Endothelial cell of umbilical vein (primary cell): ENCODE measurements at regions of chr3 and their contacts with region 1.

Region 1: DNA sequence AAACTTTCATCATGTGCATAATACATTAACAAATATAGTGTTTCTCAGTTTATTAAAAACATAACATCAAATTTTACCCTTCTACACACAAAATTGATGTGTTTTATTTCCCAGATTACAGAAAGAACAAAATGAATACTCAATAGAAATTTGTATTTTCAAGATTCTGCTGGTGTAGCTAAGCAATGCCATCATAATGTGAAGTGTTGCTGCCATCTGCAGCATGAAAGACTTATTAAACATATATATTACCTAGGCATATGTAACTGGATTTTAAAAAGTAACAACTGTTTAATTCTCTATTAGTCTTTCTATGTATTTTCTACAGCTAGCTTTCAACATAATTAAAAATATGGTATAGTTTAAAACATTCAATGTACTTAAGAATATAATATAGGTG is 27.5 kb downstream of the PLSCR5 start:
- DNase-seq: peak; percentile 76
- H3K4me3 ChIP-seq: no peak overlapping the region
- H3K27ac ChIP-seq: no peak overlapping the region
- H3K4me1 ChIP-seq: no peaks in the 10 kb centered on the region
- H3K27me3 ChIP-seq: no peaks in the 10 kb centered on the region
- CTCF ChIP-seq: peak in 1 of 2 donors; percentile 8
- POLR2A ChIP-seq: no peak

Region 2: DNA sequence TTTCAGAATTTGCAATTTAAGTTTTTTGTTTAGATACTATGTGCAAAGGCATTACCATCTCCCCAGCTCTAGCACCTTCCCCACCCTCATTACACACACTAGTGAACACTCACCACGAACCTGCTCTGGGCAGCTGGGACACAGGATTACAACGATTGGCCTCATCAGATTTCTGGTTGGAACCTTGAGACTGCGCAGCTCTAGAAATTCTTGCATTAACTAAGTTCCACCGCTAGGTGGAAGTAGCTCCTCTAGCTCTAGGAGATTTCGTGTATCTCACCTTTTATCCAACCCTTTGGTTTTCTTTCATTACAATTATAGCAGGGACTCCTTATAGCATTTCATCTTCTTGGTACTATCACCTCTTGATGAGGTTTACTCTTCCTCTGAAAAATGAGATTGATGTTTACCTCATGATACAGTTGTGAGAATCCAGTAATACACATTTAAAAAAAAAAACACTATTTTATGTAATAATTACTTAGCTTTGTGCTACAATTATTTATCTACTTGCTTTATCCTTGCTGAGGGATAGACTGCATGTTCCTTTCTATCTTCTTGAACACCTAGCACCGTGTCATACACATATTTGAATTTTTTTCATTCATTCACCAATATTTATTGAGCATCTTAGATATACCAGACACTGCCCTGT is 388.0 kb before region 1 on chr3:
- CTCF ChIA-PET with region 1: interaction called, 62 read pairs
- POLR2A ChIA-PET with region 1: no interaction called
- dilution Hi-C with region 1: no loop called
- intact Hi-C with region 1: loop called (anchors 1 kb)
- DNase-seq: peak; percentile 70
- H3K4me3 ChIP-seq: no peak overlapping the region
- H3K27ac ChIP-seq: peak overlapping the region; percentile 43
- H3K4me1 ChIP-seq: peaks cover 21% of the 10 kb centered on the region
- H3K27me3 ChIP-seq: no peaks in the 10 kb centered on the region
- CTCF ChIP-seq: peak; percentile 62 to 68
- POLR2A ChIP-seq: no peak

Region 3: GRCh38 chr3:146334151-146334550 is 243.5 kb before region 1 on chr3:
- CTCF ChIA-PET with region 1: interaction called, 98 read pairs
- POLR2A ChIA-PET with region 1: no interaction called
- dilution Hi-C with region 1: no loop called
- intact Hi-C with region 1: loop called (anchors 1 kb)
- DNase-seq: peak; percentile 46
- H3K4me3 ChIP-seq: no peak overlapping the region
- H3K27ac ChIP-seq: no peak overlapping the region
- H3K4me1 ChIP-seq: no peaks in the 10 kb centered on the region
- H3K27me3 ChIP-seq: no peaks in the 10 kb centered on the region
- CTCF ChIP-seq: peak in 1 of 2 donors; percentile 21
- POLR2A ChIP-seq: no peak

Region 4: DNA sequence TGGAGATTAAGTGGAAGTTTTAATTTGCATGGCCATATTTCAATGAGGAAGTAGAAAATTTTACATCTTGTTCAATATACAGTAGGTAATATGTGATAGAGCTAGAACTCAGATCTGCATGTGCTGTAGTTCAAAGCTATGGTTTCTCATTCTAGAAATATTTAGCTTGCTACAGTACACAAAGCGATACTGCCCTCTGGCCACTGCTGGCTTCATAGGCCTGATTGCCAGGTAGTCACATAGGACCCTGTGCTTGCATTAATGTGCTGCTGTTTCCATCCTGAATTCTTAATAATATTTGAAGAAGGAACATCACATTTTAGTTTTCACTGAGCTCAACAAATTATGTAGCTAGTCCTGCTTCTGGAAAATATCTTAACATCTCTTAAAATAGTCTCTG is 195.3 kb before region 1 on chr3:
- CTCF ChIA-PET with region 1: interaction called, 15 read pairs
- POLR2A ChIA-PET with region 1: no interaction called
- dilution Hi-C with region 1: no loop called
- intact Hi-C with region 1: no loop called
- DNase-seq: peak; percentile 34
- H3K4me3 ChIP-seq: no peak overlapping the region
- H3K27ac ChIP-seq: no peak overlapping the region
- H3K4me1 ChIP-seq: no peaks in the 10 kb centered on the region
- H3K27me3 ChIP-seq: no peaks in the 10 kb centered on the region
- CTCF ChIP-seq: peak in 1 of 2 donors; percentile 25
- POLR2A ChIP-seq: no peak

Region 5: GRCh38 chr3:146544002-146544928 is 33.4 kb before region 1 on chr3 and contains the start of gene PLSCR1:
- CTCF ChIA-PET with region 1: interaction called, 11 read pairs
- POLR2A ChIA-PET with region 1: no interaction called
- dilution Hi-C with region 1: no loop called
- intact Hi-C with region 1: loop called (anchors 2 kb)
- DNase-seq: peak; percentile 99
- H3K4me3 ChIP-seq: peak within 1 kb of the TSS; percentile 66 to 78 (median 66)
- H3K27ac ChIP-seq: peak within 1 kb of the TSS; percentile 78
- H3K4me1 ChIP-seq: peaks cover 9% of the 10 kb centered on the region
- H3K27me3 ChIP-seq: no peaks in the 10 kb centered on the region
- CTCF ChIP-seq: no peak
- POLR2A ChIP-seq: peak; percentile 74
- total RNA-seq, gene PLSCR1: 65.6 and 78.7 TPM in 2 replicates